ENCODE measurements at regions of chr16 and their contacts with region 1.

Region 1: GRCh38 chr16:30407102-30407803 is at the start of gene ZNF771:
- DNase-seq: peak; percentile 89 to 92
- H3K4me3 ChIP-seq: peak within 1 kb of the TSS; percentile 87
- H3K4me3 Mint-ChIP-seq: peak within 1 kb of the TSS; percentile 87
- H3K27ac Mint-ChIP-seq: peak within 1 kb of the TSS; percentile 94
- H3K4me1 ChIP-seq: peaks cover 15% of the 10 kb centered on the region
- H3K4me1 Mint-ChIP-seq: peaks cover 7% of the 10 kb centered on the region
- H3K27me3 ChIP-seq: no peaks in the 10 kb centered on the region
- H3K27me3 Mint-ChIP-seq: no peaks in the 10 kb centered on the region
- CTCF ChIP-seq: no peak
- total RNA-seq, gene ZNF771: 4.7 and 5.8 TPM in 2 replicates

Region 2: DNA sequence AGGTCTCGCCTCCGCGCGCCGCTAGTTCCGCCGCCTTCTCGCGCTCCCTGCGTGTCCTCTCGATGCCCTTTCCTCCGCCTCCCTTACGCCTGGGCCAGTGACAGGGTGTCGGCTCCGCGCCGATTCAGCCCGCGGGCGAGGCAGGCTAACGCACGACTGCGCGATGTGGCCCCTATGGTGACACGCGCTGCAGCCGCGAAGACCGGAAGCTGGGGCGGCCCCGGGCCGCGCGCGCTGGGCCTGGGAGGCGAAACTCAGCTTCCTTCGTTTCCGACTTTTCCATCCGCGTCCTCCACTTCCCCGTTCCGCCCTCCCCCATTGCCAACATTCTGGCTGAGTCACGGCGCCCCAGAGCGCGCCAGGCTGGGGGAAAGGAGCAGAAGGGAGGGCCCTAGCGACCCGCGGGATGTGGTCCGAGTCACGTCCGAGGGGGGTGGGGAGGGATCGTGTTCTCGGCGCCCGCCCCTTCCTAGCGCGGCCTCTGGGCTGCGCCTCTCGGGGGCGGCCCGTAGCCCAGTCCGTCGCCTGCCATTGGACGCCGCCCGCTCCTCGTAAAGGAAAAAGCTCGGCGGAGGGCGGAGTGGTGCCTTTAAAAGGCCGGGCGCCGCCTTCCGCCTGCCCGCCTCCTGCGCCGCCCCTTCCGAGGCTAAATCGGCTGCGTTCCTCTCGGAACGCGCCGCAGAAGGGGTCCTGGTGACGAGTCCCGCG is 342.0 kb before region 1 on chr16 and contains the start of gene ALDOA:
- CTCF ChIA-PET with region 1: no interaction called
- POLR2A ChIA-PET with region 1: no interaction called
- intact Hi-C with region 1: loop called (anchors 10 kb)
- DNase-seq: peak; percentile 95 to 96
- H3K4me3 ChIP-seq: peak within 1 kb of the TSS; percentile 98
- H3K4me3 Mint-ChIP-seq: peak within 1 kb of the TSS; percentile 95
- H3K27ac Mint-ChIP-seq: peak within 1 kb of the TSS; percentile 97
- H3K4me1 ChIP-seq: peaks cover 8% of the 10 kb centered on the region; the same call in 1 of the 2 replicates
- H3K4me1 Mint-ChIP-seq: peaks cover 19% of the 10 kb centered on the region
- H3K27me3 ChIP-seq: no peaks in the 10 kb centered on the region
- H3K27me3 Mint-ChIP-seq: no peaks in the 10 kb centered on the region
- CTCF ChIP-seq: no peak
- total RNA-seq, gene ALDOA: 675 and 802 TPM in 2 replicates

Region 3: GRCh38 chr16:30355144-30355894 is 51.9 kb before region 1 on chr16 and contains the start of gene CD2BP2:
- CTCF ChIA-PET with region 1: interaction called, 3 read pairs
- POLR2A ChIA-PET with region 1: interaction called, 5 read pairs
- intact Hi-C with region 1: loop called (anchors 5 kb)
- DNase-seq: peak; percentile 93 to 97
- H3K4me3 ChIP-seq: peak within 1 kb of the TSS; percentile 97
- H3K4me3 Mint-ChIP-seq: peak within 1 kb of the TSS; percentile 94
- H3K27ac Mint-ChIP-seq: peak within 1 kb of the TSS; percentile 99
- H3K4me1 ChIP-seq: peaks cover 5% of the 10 kb centered on the region; the same call in 1 of the 2 replicates
- H3K4me1 Mint-ChIP-seq: peaks cover 18% of the 10 kb centered on the region
- H3K27me3 ChIP-seq: no peaks in the 10 kb centered on the region
- H3K27me3 Mint-ChIP-seq: no peaks in the 10 kb centered on the region
- CTCF ChIP-seq: no peak
- total RNA-seq, gene CD2BP2: 50.1 and 51.8 TPM in 2 replicates

Region 4: GRCh38 chr16:30378236-30379204 is 28.7 kb before region 1 on chr16:
- CTCF ChIA-PET with region 1: no interaction called
- POLR2A ChIA-PET with region 1: interaction called, 3 read pairs
- intact Hi-C with region 1: loop called (anchors 1 kb)
- DNase-seq: peak; percentile 97 to 98
- H3K4me3 ChIP-seq: peak overlapping the region; percentile 79
- H3K4me3 Mint-ChIP-seq: peak overlapping the region; percentile 87
- H3K27ac Mint-ChIP-seq: peak overlapping the region; percentile 98
- H3K4me1 ChIP-seq: peaks cover 18% of the 10 kb centered on the region
- H3K4me1 Mint-ChIP-seq: peaks cover 13% of the 10 kb centered on the region
- H3K27me3 ChIP-seq: no peaks in the 10 kb centered on the region
- H3K27me3 Mint-ChIP-seq: no peaks in the 10 kb centered on the region
- CTCF ChIP-seq: no peak

Region 5: DNA sequence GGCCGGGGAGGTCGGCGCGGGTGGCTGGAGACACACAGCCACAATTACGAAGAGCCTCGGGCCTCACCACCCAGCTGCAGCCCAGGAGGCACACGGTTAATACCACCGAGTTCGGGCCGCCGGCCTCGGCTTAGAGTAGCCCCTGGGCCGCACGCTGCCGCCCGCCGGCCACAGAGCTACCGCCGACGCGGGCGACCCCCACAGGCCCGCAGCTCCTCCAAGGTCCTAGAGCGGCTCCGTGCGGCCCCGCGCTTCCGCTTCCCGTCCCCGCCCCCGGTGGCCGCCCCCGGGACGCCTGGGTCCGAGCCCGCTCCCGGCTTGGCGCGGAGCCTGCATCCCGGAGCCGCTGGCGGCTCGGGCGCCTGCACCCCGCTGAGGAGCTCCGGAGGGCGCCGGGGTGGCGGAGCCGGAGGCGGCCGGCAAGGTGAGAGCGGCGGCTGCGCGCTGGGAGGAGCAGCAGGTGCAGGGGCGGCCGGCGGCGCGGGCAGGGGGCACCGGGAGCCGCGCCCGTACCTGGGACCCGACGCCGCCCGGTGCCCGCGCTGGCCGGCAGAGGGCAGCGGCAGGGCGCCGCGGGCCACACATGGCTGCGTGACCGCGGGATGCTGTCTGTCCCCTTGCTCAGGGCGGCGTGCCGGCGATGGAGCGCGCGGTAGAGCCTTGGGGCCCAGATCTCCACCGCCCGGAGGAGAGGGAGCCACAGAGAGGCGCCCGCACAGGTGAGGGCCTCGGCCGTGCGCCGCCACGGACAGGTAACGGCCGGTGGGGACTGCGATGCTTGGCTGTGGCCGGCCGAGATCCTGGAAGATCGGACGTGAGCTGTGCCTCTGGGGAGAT is 11.9 kb before region 1 on chr16 and contains the start of gene ZNF48:
- CTCF ChIA-PET with region 1: interaction called, 27 read pairs
- POLR2A ChIA-PET with region 1: interaction called, 15 read pairs
- intact Hi-C with region 1: loop called (anchors 1 kb)
- DNase-seq: peak; percentile 87 to 91
- H3K4me3 ChIP-seq: peak within 1 kb of the TSS; percentile 88
- H3K4me3 Mint-ChIP-seq: peak within 1 kb of the TSS; percentile 82
- H3K27ac Mint-ChIP-seq: peak within 1 kb of the TSS; percentile 46
- H3K4me1 ChIP-seq: peaks cover 6% of the 10 kb centered on the region; the same call in 1 of the 2 replicates
- H3K4me1 Mint-ChIP-seq: peaks cover 19% of the 10 kb centered on the region
- H3K27me3 ChIP-seq: no peaks in the 10 kb centered on the region
- H3K27me3 Mint-ChIP-seq: no peaks in the 10 kb centered on the region
- CTCF ChIP-seq: peak in 1 of 2 experiments; percentile 40
- total RNA-seq, gene ZNF48: 12.8 and 13.4 TPM in 2 replicates

Region 6: GRCh38 chr16:30417529-30418349 is 10.5 kb after region 1 on chr16:
- CTCF ChIA-PET with region 1: interaction called, 32 read pairs
- POLR2A ChIA-PET with region 1: interaction called, 11 read pairs
- intact Hi-C with region 1: no loop called
- DNase-seq: peak; percentile 89 to 91
- H3K4me3 ChIP-seq: peak overlapping the region; percentile 93
- H3K4me3 Mint-ChIP-seq: peak overlapping the region; percentile 60
- H3K27ac Mint-ChIP-seq: no peak overlapping the region
- H3K4me1 ChIP-seq: peaks cover 11% of the 10 kb centered on the region; the same call in 1 of the 2 replicates
- H3K4me1 Mint-ChIP-seq: peaks cover 16% of the 10 kb centered on the region
- H3K27me3 ChIP-seq: no peaks in the 10 kb centered on the region
- H3K27me3 Mint-ChIP-seq: no peaks in the 10 kb centered on the region
- CTCF ChIP-seq: peak in 1 of 2 experiments; percentile 41

Measured in Caco-2 (cell line).